ENCODE measurements at regions of chr10 and their contacts with region 1.

Region 1: DNA sequence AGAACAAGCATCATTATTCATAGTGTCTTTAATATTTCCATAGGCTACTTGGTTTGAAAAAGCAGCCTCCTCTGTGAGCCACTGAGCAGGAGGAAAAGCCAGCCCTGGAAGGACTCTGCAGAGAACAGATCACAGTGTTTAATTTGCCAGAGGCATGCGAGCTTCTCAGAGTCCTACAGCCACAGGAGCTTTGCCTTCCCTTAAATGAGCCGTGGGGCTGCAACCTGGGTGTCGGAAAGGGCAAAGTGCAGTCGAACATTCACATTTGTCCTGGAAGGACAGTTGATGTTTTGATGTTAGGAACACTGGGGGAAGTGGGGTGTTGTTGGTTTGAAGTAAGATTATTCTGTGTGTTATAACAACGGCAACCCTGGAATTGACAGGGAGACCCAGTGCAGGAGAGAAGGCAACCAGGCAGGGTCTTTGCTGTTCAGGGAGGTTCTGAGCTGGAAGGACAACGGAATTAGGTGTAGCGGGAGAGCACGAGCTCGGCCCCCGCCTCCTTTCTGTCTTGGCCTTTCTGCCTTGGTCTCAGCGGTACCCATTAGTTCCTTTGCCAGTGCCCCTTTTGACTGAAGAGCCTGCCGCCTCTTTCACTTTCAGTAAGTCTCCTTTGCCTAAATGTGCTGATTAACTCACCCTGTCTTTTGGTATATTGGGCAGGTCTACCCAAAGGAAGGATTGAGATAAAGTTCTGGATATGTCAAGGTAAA is 192.3 kb upstream of the PITRM1 start:
- DNase-seq: peak; percentile 48
- ATAC-seq: peak; percentile 89
- H3K4me3 ChIP-seq: peak overlapping the region; percentile 26 to 57
- H3K27ac ChIP-seq: peak overlapping the region; percentile 72
- H3K4me1 ChIP-seq: peaks cover 7% of the 10 kb centered on the region
- H3K27me3 ChIP-seq: no peaks in the 10 kb centered on the region
- CTCF ChIP-seq: no peak

Region 2: DNA sequence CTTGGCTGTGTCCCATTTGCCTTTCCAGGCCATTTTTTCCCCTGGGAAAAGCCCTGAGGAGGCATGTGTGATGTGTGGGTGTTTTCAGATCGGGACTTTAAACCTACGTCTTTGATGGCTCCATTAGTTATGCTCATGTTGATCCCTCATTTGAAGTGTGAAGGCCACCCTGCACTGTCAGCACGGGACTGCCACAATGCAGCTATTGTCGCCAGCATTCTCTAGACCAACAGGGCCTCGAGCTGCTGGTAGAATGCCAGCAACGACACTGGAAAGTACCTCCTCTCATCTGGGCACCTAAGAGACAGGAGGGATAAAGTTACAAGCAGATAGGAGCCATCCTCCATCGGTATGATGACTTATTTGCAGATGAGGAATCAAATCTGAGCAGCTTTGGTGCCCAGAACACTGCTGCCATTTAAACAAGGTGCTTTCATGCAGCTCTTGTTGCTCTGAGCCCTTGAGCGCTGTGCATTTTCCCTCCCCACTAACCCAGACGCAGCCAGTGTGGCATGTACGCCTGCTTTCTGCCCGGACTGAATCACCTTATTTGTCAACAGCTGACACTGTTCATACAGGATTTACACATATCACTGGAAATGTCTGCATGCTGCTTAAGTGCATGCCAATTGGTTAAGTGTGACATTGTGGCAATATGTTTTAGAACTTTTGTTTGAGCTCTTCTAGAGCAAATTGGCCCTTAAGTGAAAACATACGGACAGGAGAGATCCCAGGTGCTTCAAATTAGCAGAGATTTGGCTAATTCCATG is 17.3 kb before region 1 on chr10:
- CTCF ChIA-PET with region 1: no interaction called
- POLR2A ChIA-PET with region 1: no interaction called
- in situ Hi-C with region 1: no loop called
- intact Hi-C with region 1: no loop called
- DNase-seq: no peak
- ATAC-seq: peak; percentile 42; the same call in 1 of the 2 replicates
- H3K4me3 ChIP-seq: no peak overlapping the region
- H3K27ac ChIP-seq: no peak overlapping the region
- H3K4me1 ChIP-seq: 0 out of 2 replicates have a peak, but pooled peaks cover 4% of the 10 kb centered on the region
- H3K27me3 ChIP-seq: no peaks in the 10 kb centered on the region
- CTCF ChIP-seq: no peak

Region 3: DNA sequence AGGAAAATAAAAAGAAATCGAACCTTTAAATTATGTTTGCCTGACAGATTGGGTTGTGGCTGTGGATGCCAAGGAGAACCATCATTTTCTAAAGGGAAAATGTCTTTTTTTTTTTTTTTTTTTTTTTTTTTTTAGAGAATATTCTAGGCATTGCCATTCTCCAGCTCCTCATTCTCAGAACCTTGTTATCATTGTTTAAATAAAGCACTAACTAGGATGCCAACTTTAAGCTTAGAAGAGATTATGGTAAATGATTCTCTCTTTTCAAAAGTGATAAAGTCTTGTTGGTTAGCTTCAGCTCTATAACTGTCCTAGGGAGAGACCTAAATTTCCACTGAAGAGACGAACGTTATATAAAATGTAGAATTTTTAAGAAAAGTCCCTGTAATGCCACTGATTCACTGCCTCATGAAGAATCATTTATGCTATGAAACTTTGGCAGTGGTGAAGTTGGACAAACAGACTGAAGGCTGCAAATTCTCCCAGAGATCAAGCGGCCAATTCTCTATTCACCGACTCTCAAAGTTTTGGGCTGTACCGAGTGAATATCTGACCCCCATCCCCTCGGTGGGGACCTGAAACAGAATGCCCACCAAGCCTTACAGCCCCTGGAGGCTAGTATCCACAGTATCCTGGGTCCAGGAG is 15.6 kb after region 1 on chr10:
- CTCF ChIA-PET with region 1: interaction called, 10 read pairs
- POLR2A ChIA-PET with region 1: no interaction called
- in situ Hi-C with region 1: no loop called
- intact Hi-C with region 1: no loop called
- DNase-seq: no peak
- ATAC-seq: no peak
- H3K4me3 ChIP-seq: no peak overlapping the region
- H3K27ac ChIP-seq: no peak overlapping the region
- H3K4me1 ChIP-seq: no peaks in the 10 kb centered on the region
- H3K27me3 ChIP-seq: no peaks in the 10 kb centered on the region
- CTCF ChIP-seq: no peak

Measured in Panc1 (cell line).